PC-9 (cell line): ENCODE measurements at regions of chr10 and their contacts with region 1.

Region 1: GRCh38 chr10:11986593-11987216 is 55.9 kb downstream of the UPF2 start:
- DNase-seq: peak; percentile 37 to 73
- H3K4me3 ChIP-seq: no peak overlapping the region
- H3K27ac ChIP-seq: peak overlapping the region; percentile 51
- H3K4me1 ChIP-seq: peaks cover 6% of the 10 kb centered on the region; the same call in 1 of the 2 replicates
- H3K27me3 ChIP-seq: no peaks in the 10 kb centered on the region
- CTCF ChIP-seq: peak; percentile 88

Region 2: GRCh38 chr10:11782793-11783557 is 203.7 kb before region 1 on chr10:
- CTCF ChIA-PET with region 1: interaction called, 6 read pairs
- POLR2A ChIA-PET with region 1: no interaction called
- intact Hi-C with region 1: loop called (anchors 1 kb)
- DNase-seq: peak; percentile 11 to 59
- H3K4me3 ChIP-seq: no peak overlapping the region
- H3K27ac ChIP-seq: no peak overlapping the region
- H3K4me1 ChIP-seq: no peaks in the 10 kb centered on the region
- H3K27me3 ChIP-seq: no peaks in the 10 kb centered on the region
- CTCF ChIP-seq: peak; percentile 84

Region 3: DNA sequence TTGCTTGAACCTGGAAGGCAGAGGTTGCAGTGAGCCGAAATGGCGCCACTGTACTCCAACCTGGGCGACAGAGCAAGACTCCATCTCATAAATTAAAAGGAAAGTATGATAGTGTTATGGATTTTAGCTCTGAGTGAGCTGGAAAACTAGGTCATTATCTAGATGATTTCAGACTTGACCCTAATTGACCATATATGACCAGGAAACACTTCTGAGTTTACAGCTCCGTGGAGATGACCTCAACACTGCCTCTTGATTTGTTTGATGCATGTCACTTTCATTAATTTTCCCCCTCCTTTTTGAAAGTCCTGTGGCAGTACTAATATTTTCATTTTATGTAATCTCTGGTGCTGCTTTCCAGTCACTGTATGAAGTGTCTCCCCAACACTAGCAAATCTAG is 135.0 kb after region 1 on chr10:
- CTCF ChIA-PET with region 1: no interaction called
- POLR2A ChIA-PET with region 1: no interaction called
- intact Hi-C with region 1: no loop called
- DNase-seq: no peak
- H3K4me3 ChIP-seq: no peak overlapping the region
- H3K27ac ChIP-seq: no peak overlapping the region
- H3K4me1 ChIP-seq: no peaks in the 10 kb centered on the region
- H3K27me3 ChIP-seq: no peaks in the 10 kb centered on the region
- CTCF ChIP-seq: no peak